ENCODE measurements at regions of chr11 and their contacts with region 1.

Region 1: DNA sequence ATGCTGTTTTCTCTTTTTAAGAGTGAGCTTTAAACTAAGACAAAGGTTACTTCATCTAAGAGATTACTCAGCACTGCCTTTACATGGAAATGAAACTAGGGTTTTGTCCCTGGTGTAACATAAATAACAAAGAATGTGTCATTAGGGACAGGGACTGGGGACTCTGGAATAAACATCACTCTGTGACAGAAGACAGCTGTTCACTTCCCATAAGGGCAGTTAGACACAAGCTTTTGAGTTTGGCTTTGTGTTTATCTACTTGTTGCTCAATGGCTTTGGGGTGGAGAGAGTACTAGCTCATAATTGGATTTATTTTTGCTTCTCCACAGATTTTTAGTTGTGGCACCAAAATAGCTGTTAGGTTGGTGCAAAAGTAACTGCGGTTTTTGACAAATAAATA is 154.5 kb downstream of the OR4C45 start:
- DNase-seq: no peak
- ATAC-seq: no peak
- H3K4me3 ChIP-seq: no peak overlapping the region
- H3K27ac ChIP-seq: no peak overlapping the region
- H3K4me1 ChIP-seq: no peaks in the 10 kb centered on the region
- H3K27me3 ChIP-seq: no peaks in the 10 kb centered on the region
- CTCF ChIP-seq: no peak

Region 2: GRCh38 chr11:50174189-50174588 is 13.0 kb before region 1 on chr11:
- CTCF ChIA-PET with region 1: no interaction called
- POLR2A ChIA-PET with region 1: interaction called, 13 read pairs
- in situ Hi-C with region 1: no loop called
- intact Hi-C with region 1: no loop called
- DNase-seq: peak; percentile 8
- ATAC-seq: 0 out of 2 replicates have a peak, but pooled peaks have one; percentile 74
- H3K4me3 ChIP-seq: no peak overlapping the region
- H3K27ac ChIP-seq: no peak overlapping the region
- H3K4me1 ChIP-seq: no peaks in the 10 kb centered on the region
- H3K27me3 ChIP-seq: no peaks in the 10 kb centered on the region
- CTCF ChIP-seq: peak; percentile 40; the same call in 1 of the 2 replicates